ENCODE measurements at regions of chr1 and their contacts with region 1.

Region 1: GRCh38 chr1:167687919-167688519 is 33.8 kb upstream of the MPZL1 start:
- DNase-seq: peak; percentile 76 to 78
- ATAC-seq: peak; percentile 60 to 82
- H3K4me3 ChIP-seq: no peak overlapping the region
- H3K27ac ChIP-seq: no peak overlapping the region
- H3K4me1 ChIP-seq: peaks cover 2% of the 10 kb centered on the region; the same call in 2 of the 3 replicates
- CTCF ChIP-seq: peak; percentile 91
- EP300 ChIP-seq: no peak
- POLR2A ChIP-seq: no peak
- RAD21 ChIP-seq: peak; percentile 94 to 96

Region 2: GRCh38 chr1:167563579-167564246 is 124.3 kb before region 1 on chr1:
- CTCF ChIA-PET with region 1: interaction called, 14 read pairs
- POLR2A ChIA-PET with region 1: no interaction called
- DNase-seq: no peak
- ATAC-seq: no peak
- H3K4me3 ChIP-seq: no peak overlapping the region
- H3K27ac ChIP-seq: peak overlapping the region in 1 of 2 experiments; percentile 66; a peak in 2 of 6 replicates
- H3K4me1 ChIP-seq: peaks cover 13% of the 10 kb centered on the region; the same call in 2 of the 3 replicates
- CTCF ChIP-seq: no peak
- EP300 ChIP-seq: no peak
- POLR2A ChIP-seq: no peak
- RAD21 ChIP-seq: no peak

Region 3: DNA sequence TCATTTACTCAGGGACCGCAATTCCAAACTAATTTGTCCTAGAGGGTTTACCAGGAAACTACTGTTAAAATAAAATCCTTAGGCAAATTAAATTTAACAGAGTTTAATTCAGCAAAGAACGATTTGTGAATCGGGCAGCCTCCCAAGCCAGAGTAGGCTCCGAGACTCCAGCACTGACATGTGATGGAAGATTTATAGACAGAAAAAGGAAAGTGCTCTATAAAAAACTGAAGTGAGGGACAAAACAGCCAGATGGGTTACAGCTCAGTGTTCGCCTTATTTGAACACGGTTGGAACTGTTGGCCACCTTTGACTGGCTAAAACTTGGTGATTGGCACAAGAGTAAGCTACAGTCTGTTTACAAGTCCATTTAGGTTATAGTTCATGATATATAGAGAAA is 93.2 kb before region 1 on chr1:
- CTCF ChIA-PET with region 1: interaction called, 115 read pairs
- POLR2A ChIA-PET with region 1: interaction called, 4 read pairs
- DNase-seq: no peak
- ATAC-seq: no peak
- H3K4me3 ChIP-seq: no peak overlapping the region
- H3K27ac ChIP-seq: no peak overlapping the region
- H3K4me1 ChIP-seq: peaks cover under 1% of the 10 kb centered on the region; the same call in 1 of the 3 replicates
- CTCF ChIP-seq: no peak
- EP300 ChIP-seq: no peak
- POLR2A ChIP-seq: no peak
- RAD21 ChIP-seq: no peak

Region 4: DNA sequence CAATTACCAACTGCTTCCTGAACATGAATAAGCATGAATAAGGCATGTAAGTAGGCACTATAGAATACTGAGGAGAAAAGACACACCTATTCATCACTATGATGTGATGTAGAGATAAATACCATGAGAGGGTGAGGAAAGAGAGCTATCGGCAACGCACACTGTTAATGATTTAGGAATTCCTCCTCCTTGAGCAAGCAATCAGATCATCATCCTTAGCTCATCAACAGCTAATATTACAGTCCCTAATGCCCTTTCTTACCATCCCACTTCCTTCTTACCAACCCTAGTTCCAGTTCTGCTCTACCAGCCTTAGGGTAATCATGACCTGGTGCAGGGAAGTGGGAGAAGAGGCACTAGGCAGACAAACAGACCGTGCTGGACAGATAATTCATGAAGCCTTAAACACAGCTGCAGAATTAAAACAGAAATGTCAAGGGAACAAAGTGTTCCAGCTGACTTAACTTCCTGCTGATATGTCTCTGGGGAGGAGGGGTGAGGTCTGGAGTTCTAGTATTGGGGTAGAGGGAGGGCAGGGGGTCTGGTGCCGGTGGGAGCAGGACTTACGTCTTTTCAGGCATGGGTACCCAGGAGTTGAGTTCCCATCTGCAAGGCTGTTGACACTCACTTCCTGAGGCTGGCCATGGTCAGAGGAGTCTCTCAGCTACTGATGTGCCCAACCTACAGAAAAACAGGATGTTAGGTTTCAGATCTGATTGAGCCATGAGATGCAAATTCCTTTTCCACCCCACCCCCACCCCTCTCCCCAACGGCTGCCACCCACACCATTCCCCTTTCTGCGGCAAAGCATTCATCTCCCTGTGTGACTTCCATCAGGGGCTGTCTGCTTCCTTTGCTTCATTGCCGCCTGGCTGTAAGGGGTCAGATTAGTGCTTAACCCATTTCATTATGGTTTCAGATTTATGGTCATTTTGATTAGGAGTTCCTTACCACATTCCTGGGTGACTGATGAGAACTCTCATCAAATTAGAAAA is 70.6 kb before region 1 on chr1:
- CTCF ChIA-PET with region 1: interaction called, 12 read pairs
- POLR2A ChIA-PET with region 1: no interaction called
- DNase-seq: peak in 1 of 2 experiments; percentile 16
- ATAC-seq: 0 out of 6 replicates have a peak, but pooled peaks of 1 of the 2 experiments have one; percentile 24
- H3K4me3 ChIP-seq: no peak overlapping the region
- H3K27ac ChIP-seq: no peak overlapping the region
- H3K4me1 ChIP-seq: peaks cover 5% of the 10 kb centered on the region; the same call in 1 of the 3 replicates
- CTCF ChIP-seq: no peak
- EP300 ChIP-seq: no peak
- POLR2A ChIP-seq: no peak
- RAD21 ChIP-seq: no peak

Region 5: DNA sequence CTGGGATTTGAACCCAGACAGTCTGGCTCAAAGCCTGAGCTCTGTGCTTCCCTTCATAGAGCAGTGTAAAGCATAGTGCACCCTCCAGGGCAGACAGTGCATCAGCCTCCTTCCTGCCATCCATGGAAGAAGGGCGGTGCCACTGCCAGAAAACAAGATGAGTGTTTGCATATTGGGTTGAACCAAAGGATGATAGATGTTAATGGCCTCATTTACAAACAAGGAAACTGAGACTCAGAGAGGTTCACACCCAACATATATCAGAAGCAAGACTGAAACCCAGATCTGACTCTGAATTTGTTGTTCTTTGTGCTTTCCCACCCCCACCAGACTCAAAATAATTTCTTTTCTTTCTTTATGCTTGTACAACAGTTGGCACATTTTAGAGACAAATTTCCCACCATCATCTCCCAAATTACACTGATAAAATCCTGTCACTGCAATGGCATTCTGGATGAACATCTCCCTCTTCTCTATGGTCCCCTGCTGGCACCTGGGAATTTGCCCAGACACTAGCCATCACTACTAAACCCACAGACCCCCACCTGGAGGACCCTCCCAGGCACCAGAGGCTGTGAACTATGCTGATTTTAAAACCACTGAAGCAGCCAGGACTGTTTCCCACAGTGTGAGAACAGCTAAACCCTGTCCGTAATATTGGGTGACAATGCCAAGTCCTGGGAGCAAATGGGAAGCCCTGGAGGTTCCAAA is 11.7 kb before region 1 on chr1:
- CTCF ChIA-PET with region 1: interaction called, 18 read pairs
- POLR2A ChIA-PET with region 1: no interaction called
- DNase-seq: no peak
- ATAC-seq: no peak
- H3K4me3 ChIP-seq: no peak overlapping the region
- H3K27ac ChIP-seq: no peak overlapping the region
- H3K4me1 ChIP-seq: no peaks in the 10 kb centered on the region
- CTCF ChIP-seq: no peak
- EP300 ChIP-seq: no peak
- POLR2A ChIP-seq: no peak
- RAD21 ChIP-seq: no peak

Measured in A549 (cell line).